Caco-2 (cell line): ENCODE measurements at regions of chr7 and their contacts with region 1.

Region 1: GRCh38 chr7:47763063-47763974 is 181.4 kb upstream of the TNS3 start:
- DNase-seq: peak; percentile 92 to 96
- H3K4me3 ChIP-seq: no peak overlapping the region
- H3K4me3 Mint-ChIP-seq: peak overlapping the region; percentile 70
- H3K27ac Mint-ChIP-seq: peak overlapping the region; percentile 98
- H3K4me1 ChIP-seq: peaks cover 44% of the 10 kb centered on the region
- H3K4me1 Mint-ChIP-seq: peaks cover 34% of the 10 kb centered on the region
- H3K27me3 ChIP-seq: no peaks in the 10 kb centered on the region
- H3K27me3 Mint-ChIP-seq: no peaks in the 10 kb centered on the region
- CTCF ChIP-seq: no peak

Region 2: GRCh38 chr7:47405921-47406792 is 357.2 kb before region 1 on chr7:
- CTCF ChIA-PET with region 1: no interaction called
- POLR2A ChIA-PET with region 1: no interaction called
- intact Hi-C with region 1: no loop called
- DNase-seq: peak in 1 of 2 experiments; percentile 25
- H3K4me3 ChIP-seq: no peak overlapping the region
- H3K4me3 Mint-ChIP-seq: no peak overlapping the region
- H3K27ac Mint-ChIP-seq: peak overlapping the region; percentile 25
- H3K4me1 ChIP-seq: no peaks in the 10 kb centered on the region
- H3K4me1 Mint-ChIP-seq: peaks cover 11% of the 10 kb centered on the region
- H3K27me3 ChIP-seq: no peaks in the 10 kb centered on the region
- H3K27me3 Mint-ChIP-seq: no peaks in the 10 kb centered on the region
- CTCF ChIP-seq: no peak

Region 3: GRCh38 chr7:47557169-47557985 is 205.9 kb before region 1 on chr7:
- CTCF ChIA-PET with region 1: no interaction called
- POLR2A ChIA-PET with region 1: no interaction called
- intact Hi-C with region 1: loop called (anchors 1 kb)
- DNase-seq: no peak
- H3K4me3 ChIP-seq: no peak overlapping the region
- H3K4me3 Mint-ChIP-seq: peak overlapping the region; percentile 37
- H3K27ac Mint-ChIP-seq: peak overlapping the region; percentile 92
- H3K4me1 ChIP-seq: peaks cover 81% of the 10 kb centered on the region
- H3K4me1 Mint-ChIP-seq: peaks cover 61% of the 10 kb centered on the region
- H3K27me3 ChIP-seq: no peaks in the 10 kb centered on the region
- H3K27me3 Mint-ChIP-seq: no peaks in the 10 kb centered on the region
- CTCF ChIP-seq: no peak

Region 4: DNA sequence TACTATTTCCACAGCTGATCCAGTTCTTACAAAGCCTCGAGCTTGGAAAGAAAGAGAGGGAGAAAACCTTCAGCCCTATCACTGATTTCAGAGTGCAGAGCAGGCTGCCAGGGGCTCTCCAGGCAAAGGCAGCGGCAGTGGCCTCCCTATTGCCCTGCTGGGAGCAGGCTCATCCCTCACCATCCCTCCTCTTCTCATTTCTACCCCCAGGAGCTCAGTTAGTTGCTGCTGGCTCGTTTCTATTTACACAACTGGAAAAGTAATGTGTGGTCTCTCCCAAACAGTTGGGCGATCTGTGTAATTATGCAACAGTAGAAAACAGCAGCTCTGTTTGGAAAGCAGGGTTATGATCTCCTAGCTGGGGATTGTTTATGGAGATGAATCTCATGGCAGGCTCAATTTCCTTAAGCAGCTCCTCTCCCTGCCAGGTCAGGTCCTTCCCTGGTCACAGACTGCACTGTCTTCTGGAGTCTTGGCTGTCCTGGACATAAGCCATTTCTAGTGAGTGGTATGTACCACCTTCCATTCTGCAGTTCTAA is 152.7 kb before region 1 on chr7:
- CTCF ChIA-PET with region 1: no interaction called
- POLR2A ChIA-PET with region 1: no interaction called
- intact Hi-C with region 1: loop called (anchors 1 kb)
- DNase-seq: no peak
- H3K4me3 ChIP-seq: no peak overlapping the region
- H3K4me3 Mint-ChIP-seq: no peak overlapping the region
- H3K27ac Mint-ChIP-seq: peak overlapping the region; percentile 72
- H3K4me1 ChIP-seq: peaks cover 47% of the 10 kb centered on the region
- H3K4me1 Mint-ChIP-seq: peaks cover 33% of the 10 kb centered on the region
- H3K27me3 ChIP-seq: no peaks in the 10 kb centered on the region
- H3K27me3 Mint-ChIP-seq: no peaks in the 10 kb centered on the region
- CTCF ChIP-seq: no peak

Region 5: DNA sequence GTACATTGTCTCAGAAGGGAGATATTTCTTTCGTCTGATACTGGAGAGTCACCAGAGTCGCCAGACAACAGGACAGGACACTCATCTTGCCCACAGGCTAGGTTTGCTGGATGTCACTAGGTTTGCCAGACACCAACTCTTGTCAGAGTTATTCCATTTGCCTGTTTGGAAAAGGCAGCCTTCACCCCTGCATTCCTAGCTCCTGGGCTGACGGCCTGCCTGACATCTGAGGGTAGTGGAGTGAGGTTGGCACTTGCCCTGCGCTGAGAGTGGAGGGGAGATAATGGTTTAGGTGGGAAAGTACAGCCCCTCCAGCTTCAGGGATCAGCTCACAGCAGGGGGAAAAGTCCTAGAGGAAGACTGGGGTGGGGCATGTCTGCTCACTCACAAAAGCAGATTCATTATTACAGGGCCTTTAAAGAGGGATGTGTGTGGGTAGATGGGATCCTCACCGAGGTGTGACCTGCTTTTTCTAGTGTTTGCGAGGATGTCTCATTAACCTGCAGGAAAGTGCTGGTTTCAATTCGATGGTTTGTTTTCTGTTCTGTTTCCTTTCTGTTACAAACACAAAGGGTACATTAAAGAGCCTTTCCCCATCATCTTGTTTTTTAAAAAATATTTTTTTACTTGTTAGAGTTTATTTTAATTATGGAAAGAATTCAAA is 102.1 kb before region 1 on chr7:
- CTCF ChIA-PET with region 1: interaction called, 4 read pairs
- POLR2A ChIA-PET with region 1: interaction called, 8 read pairs
- intact Hi-C with region 1: loop called (anchors 1 kb)
- DNase-seq: no peak
- H3K4me3 ChIP-seq: no peak overlapping the region
- H3K4me3 Mint-ChIP-seq: no peak overlapping the region
- H3K27ac Mint-ChIP-seq: peak overlapping the region; percentile 55
- H3K4me1 ChIP-seq: peaks cover 52% of the 10 kb centered on the region
- H3K4me1 Mint-ChIP-seq: peaks cover 30% of the 10 kb centered on the region
- H3K27me3 ChIP-seq: no peaks in the 10 kb centered on the region
- H3K27me3 Mint-ChIP-seq: no peaks in the 10 kb centered on the region
- CTCF ChIP-seq: no peak

Region 6: GRCh38 chr7:47724335-47724982 is 38.9 kb before region 1 on chr7:
- CTCF ChIA-PET with region 1: interaction called, 3 read pairs
- POLR2A ChIA-PET with region 1: no interaction called
- intact Hi-C with region 1: loop called (anchors 1 kb)
- DNase-seq: peak; percentile 42 to 47
- H3K4me3 ChIP-seq: no peak overlapping the region
- H3K4me3 Mint-ChIP-seq: no peak overlapping the region
- H3K27ac Mint-ChIP-seq: peak overlapping the region; percentile 83
- H3K4me1 ChIP-seq: peaks cover 19% of the 10 kb centered on the region
- H3K4me1 Mint-ChIP-seq: peaks cover 47% of the 10 kb centered on the region
- H3K27me3 ChIP-seq: no peaks in the 10 kb centered on the region
- H3K27me3 Mint-ChIP-seq: no peaks in the 10 kb centered on the region
- CTCF ChIP-seq: no peak

Region 7: GRCh38 chr7:47778153-47778661 is 14.9 kb after region 1 on chr7:
- CTCF ChIA-PET with region 1: interaction called, 4 read pairs
- POLR2A ChIA-PET with region 1: interaction called, 5 read pairs
- intact Hi-C with region 1: loop called (anchors 1 kb)
- DNase-seq: peak in 1 of 2 experiments; percentile 63
- H3K4me3 ChIP-seq: no peak overlapping the region
- H3K4me3 Mint-ChIP-seq: no peak overlapping the region
- H3K27ac Mint-ChIP-seq: peak overlapping the region; percentile 71
- H3K4me1 ChIP-seq: peaks cover 83% of the 10 kb centered on the region
- H3K4me1 Mint-ChIP-seq: peaks cover 75% of the 10 kb centered on the region
- H3K27me3 ChIP-seq: no peaks in the 10 kb centered on the region
- H3K27me3 Mint-ChIP-seq: no peaks in the 10 kb centered on the region
- CTCF ChIP-seq: no peak

Region 8: DNA sequence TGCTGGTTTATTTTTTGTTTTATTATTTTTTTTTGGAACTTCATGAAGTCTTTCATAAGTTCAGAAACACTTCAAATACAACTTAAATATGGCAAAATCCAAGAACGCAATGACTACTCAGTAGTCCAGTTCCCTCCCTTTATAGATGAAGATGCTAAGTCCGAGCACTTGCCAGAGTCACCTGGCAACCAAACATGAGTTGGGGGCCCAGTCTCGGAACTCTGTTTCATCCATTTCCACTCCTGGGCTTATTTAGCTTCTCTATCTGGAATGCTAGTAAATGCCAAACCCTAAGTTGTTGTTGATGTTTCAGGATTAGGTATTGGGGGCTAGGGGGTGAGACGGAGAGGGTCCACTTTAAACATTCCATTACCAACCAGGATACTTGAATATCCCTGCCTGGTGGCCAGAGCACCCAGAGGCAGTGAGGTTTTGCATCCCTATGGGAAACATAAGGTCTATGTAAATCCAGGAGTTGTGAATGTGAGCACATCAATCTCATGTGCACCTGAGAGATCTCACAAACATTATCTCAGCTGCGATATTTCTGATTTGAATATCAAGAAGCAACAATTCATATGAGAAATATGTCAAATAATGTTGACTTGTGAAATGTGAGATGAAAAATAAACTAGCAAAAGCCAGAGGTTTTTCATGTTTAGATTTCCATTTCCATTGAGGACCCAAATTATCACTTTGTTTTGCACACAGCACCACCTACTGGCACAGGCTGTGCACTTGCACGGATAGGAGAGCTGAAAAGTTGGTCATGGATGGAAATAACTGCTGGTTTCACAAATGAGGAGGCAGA is 55.7 kb after region 1 on chr7:
- CTCF ChIA-PET with region 1: interaction called, 3 read pairs
- POLR2A ChIA-PET with region 1: no interaction called
- intact Hi-C with region 1: loop called (anchors 1 kb)
- DNase-seq: peak; percentile 66 to 82
- H3K4me3 ChIP-seq: no peak overlapping the region
- H3K4me3 Mint-ChIP-seq: no peak overlapping the region
- H3K27ac Mint-ChIP-seq: no peak overlapping the region
- H3K4me1 ChIP-seq: peaks cover 15% of the 10 kb centered on the region
- H3K4me1 Mint-ChIP-seq: peaks cover 26% of the 10 kb centered on the region
- H3K27me3 ChIP-seq: no peaks in the 10 kb centered on the region
- H3K27me3 Mint-ChIP-seq: no peaks in the 10 kb centered on the region
- CTCF ChIP-seq: peak; percentile 96 to 98